ENCODE measurements at regions of chr14 and their contacts with region 1.

Region 1: DNA sequence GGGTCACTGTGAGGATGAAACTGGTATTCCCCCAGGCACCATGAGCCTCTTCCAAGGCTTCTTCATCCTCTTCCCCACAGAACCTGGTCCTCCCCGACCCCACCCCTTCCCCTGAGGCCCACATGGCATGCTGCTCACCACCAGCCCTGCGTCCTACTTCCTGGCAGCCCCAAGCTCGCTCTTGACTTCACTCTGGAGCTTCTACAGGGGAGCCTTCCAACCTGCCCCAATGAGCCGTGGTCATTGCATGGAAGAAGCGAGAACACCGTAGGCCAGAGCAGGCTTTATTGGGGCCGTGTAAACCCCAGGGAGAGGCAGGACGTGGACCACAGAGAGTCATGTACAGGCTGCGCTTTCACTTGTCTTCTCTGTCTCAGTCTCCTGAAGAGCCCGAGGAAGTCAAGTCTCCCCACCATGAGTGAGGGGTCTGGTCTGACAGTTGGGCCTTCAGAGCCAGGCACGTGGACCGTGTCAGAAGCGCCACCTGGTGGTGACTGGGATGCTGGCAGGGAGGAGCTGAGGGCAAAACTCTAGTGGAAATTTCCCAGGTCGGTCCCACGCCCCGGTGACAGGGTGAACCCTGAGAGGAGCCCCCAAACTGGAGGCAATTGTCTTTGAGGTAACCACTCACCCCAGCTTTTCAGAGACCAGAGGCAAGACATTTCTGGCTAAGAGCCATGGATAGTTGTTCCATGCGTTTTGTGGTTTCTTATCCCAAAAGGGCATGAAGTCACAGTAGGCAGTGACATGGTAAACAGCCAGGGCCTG is 17.5 kb downstream of the RPS6KL1 start:
- DNase-seq: peak; percentile 70
- ATAC-seq: peak; percentile 73
- H3K4me3 Mint-ChIP-seq: no peak overlapping the region
- H3K27ac Mint-ChIP-seq: peak overlapping the region; percentile 53
- H3K4me1 Mint-ChIP-seq: peaks cover 43% of the 10 kb centered on the region
- H3K27me3 Mint-ChIP-seq: no peaks in the 10 kb centered on the region
- CTCF ChIP-seq: peak; percentile 81

Region 2: DNA sequence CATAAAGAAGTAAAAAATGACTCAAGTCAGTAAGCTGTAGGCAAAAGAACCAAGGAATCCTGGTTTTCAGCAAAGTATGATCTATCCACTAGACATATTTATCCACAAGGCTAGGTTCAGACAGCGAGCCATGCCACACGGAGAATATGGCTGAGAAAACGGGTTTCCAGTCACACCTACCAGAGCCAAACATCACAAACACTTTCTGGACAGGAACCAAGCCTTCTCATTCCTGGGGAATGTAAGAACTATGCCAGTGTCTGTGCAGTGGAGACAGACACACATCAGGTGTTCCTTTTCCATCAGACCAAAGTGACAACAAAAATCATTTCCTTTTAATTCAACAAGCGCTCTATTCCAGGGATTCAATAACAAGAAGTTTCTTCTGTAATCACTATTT is 233.8 kb before region 1 on chr14:
- CTCF ChIA-PET with region 1: no interaction called
- POLR2A ChIA-PET with region 1: no interaction called
- intact Hi-C with region 1: no loop called
- DNase-seq: no peak
- ATAC-seq: no peak
- H3K4me3 Mint-ChIP-seq: no peak overlapping the region
- H3K27ac Mint-ChIP-seq: no peak overlapping the region
- H3K4me1 Mint-ChIP-seq: no peaks in the 10 kb centered on the region
- H3K27me3 Mint-ChIP-seq: no peaks in the 10 kb centered on the region
- CTCF ChIP-seq: no peak

Region 3: GRCh38 chr14:74875941-74876913 is 29.3 kb before region 1 on chr14 and contains the start of gene PROX2:
- CTCF ChIA-PET with region 1: interaction called, 58 read pairs
- POLR2A ChIA-PET with region 1: interaction called, 15 read pairs
- intact Hi-C with region 1: loop called (anchors 2 kb)
- DNase-seq: no peak
- ATAC-seq: peak; percentile 57
- H3K4me3 Mint-ChIP-seq: peak within 1 kb of the TSS; percentile 28
- H3K27ac Mint-ChIP-seq: no peak within 1 kb of the TSS
- H3K4me1 Mint-ChIP-seq: peaks cover 26% of the 10 kb centered on the region
- H3K27me3 Mint-ChIP-seq: no peaks in the 10 kb centered on the region
- CTCF ChIP-seq: no peak
- total RNA-seq, gene PROX2: 0.07 TPM in 1 of 2 replicates, not detected in the other

Region 4: GRCh38 chr14:74888164-74889158 is 17.1 kb before region 1 on chr14:
- CTCF ChIA-PET with region 1: interaction called, 58 read pairs
- POLR2A ChIA-PET with region 1: interaction called, 5 read pairs
- intact Hi-C with region 1: no loop called
- DNase-seq: no peak
- ATAC-seq: no peak
- H3K4me3 Mint-ChIP-seq: no peak overlapping the region
- H3K27ac Mint-ChIP-seq: no peak overlapping the region
- H3K4me1 Mint-ChIP-seq: peaks cover 48% of the 10 kb centered on the region
- H3K27me3 Mint-ChIP-seq: no peaks in the 10 kb centered on the region
- CTCF ChIP-seq: no peak

Region 5: GRCh38 chr14:74945823-74946682 is 40.5 kb after region 1 on chr14:
- CTCF ChIA-PET with region 1: interaction called, 15 read pairs
- POLR2A ChIA-PET with region 1: interaction called, 5 read pairs
- intact Hi-C with region 1: loop called (anchors 5 kb)
- DNase-seq: peak; percentile 61
- ATAC-seq: peak; percentile 67
- H3K4me3 Mint-ChIP-seq: no peak overlapping the region
- H3K27ac Mint-ChIP-seq: peak overlapping the region; percentile 46
- H3K4me1 Mint-ChIP-seq: peaks cover 34% of the 10 kb centered on the region
- H3K27me3 Mint-ChIP-seq: peaks cover 2% of the 10 kb centered on the region
- CTCF ChIP-seq: no peak

Region 6: DNA sequence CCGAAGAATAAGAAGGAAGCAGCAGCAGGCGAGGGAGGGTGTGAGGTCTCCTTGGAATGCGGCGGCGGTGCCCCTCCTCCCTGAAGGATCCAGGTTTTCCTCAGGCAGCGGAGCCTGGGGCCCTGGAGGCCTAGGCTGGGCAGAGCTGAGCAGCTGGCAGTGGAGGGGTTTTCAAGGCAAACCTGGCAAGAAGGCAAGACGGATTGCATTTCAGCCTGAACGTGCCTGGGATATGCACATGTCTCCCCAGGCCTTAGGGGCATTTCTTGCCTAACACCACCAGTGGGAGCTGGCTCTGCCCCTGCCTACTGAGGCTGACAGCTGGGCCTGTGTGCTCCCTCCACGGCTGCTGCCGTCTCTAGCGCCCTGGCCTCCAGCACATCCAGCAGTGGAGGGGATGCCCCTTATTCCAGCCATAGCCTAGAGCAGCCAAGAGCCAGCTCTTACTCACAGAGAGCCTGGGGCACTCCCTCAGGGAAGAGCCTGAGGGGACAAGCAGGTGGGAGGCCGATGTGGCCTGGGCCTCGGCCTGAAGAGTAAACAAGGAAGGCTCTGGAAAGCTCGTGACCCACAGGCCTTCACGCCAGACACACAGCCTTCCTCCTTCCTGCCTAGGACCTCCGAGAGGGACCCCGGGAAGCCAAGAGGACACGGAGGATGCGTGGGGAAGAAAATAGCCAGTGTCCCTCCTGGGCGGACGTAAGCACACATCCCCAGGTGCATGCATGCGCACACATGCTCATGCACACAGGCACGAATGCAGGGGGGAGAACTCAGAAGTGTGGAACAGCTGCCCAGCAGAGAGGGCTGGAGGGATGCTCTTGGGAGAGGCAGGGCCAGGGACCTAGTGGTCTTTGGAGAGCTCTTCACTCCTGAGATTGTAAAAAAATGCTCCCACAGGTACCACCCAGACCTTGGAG is 74.1 kb after region 1 on chr14:
- CTCF ChIA-PET with region 1: no interaction called
- POLR2A ChIA-PET with region 1: no interaction called
- intact Hi-C with region 1: no loop called
- DNase-seq: no peak
- ATAC-seq: no peak
- H3K4me3 Mint-ChIP-seq: no peak overlapping the region
- H3K27ac Mint-ChIP-seq: no peak overlapping the region
- H3K4me1 Mint-ChIP-seq: no peaks in the 10 kb centered on the region
- H3K27me3 Mint-ChIP-seq: no peaks in the 10 kb centered on the region
- CTCF ChIP-seq: no peak

Region 7: GRCh38 chr14:75323571-75323970 is 418.0 kb after region 1 on chr14:
- CTCF ChIA-PET with region 1: no interaction called
- POLR2A ChIA-PET with region 1: no interaction called
- intact Hi-C with region 1: no loop called
- DNase-seq: no peak
- ATAC-seq: no peak
- H3K4me3 Mint-ChIP-seq: no peak overlapping the region
- H3K27ac Mint-ChIP-seq: no peak overlapping the region
- H3K4me1 Mint-ChIP-seq: no peaks in the 10 kb centered on the region
- H3K27me3 Mint-ChIP-seq: peaks cover 4% of the 10 kb centered on the region
- CTCF ChIP-seq: no peak

Measured in activated B cell treated with CpG ODN at 0.5 μM for 24 hours (primary cell).